Activated CD8-positive, alpha-beta memory T cell treated with anti-CD3 and anti-CD28 coated beads, Interleukin-2, amount 10 ng/mL, durations not matched to agents 7 days and 5 days (primary cell): ENCODE measurements at regions of chr17 and their contacts with region 1.

Region 1: GRCh38 chr17:45385331-45385997 is 47.2 kb downstream of the ARHGAP27 start:
- DNase-seq: peak; percentile 92
- ATAC-seq: peak; percentile 97
- H3K4me3 Mint-ChIP-seq: no peak overlapping the region
- H3K27ac Mint-ChIP-seq: no peak overlapping the region
- H3K4me1 Mint-ChIP-seq: peaks cover 25% of the 10 kb centered on the region
- H3K27me3 Mint-ChIP-seq: peaks cover 7% of the 10 kb centered on the region

Region 2: GRCh38 chr17:45087504-45087975 is 297.9 kb before region 1 on chr17:
- CTCF ChIA-PET with region 1: no interaction called
- DNase-seq: no peak
- ATAC-seq: no peak
- H3K4me3 Mint-ChIP-seq: no peak overlapping the region
- H3K27ac Mint-ChIP-seq: no peak overlapping the region
- H3K4me1 Mint-ChIP-seq: peaks cover 12% of the 10 kb centered on the region
- H3K27me3 Mint-ChIP-seq: no peaks in the 10 kb centered on the region

Region 3: DNA sequence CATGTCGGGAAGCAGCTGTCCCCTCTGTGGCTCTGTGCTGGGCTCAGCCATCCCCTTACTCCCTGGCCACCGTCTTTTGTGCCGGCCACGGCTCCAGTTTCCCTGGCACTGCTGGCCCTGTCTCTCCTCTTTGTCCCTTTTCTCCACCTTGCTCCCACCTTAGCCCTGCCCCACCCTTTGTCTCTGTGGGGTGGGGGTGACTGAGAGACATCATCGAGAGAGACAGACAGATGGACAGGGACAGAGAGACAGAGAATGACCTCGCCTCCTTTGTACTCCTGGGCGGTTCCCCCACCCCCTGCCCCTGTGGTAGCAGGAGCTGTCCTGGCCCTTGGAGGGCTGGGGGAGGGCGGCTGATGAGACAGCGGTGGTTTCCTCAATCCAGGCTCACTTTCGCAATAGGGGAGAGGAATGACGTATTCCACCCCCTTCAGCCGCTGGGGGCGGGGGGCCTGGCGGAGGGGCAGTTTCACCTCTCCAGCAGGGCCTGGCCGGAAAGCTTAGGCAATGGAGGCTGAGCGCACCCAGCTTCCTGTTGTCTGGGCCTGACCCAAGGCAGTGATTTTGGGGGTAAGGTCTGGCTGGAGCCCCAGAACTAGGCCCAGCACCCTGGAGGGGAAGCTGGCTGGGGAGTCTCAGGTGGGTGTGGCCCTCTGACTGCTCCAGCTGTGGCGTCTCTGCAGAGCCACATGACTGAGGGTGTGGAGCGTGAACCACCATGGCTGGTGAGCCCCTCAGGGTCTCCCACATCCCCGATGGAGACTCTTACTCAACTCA is 156.5 kb before region 1 on chr17:
- CTCF ChIA-PET with region 1: interaction called, 23 read pairs
- DNase-seq: peak; percentile 93
- ATAC-seq: peak; percentile 47
- H3K4me3 Mint-ChIP-seq: peak overlapping the region; percentile 93
- H3K27ac Mint-ChIP-seq: peak overlapping the region; percentile 100
- H3K4me1 Mint-ChIP-seq: peaks cover 74% of the 10 kb centered on the region
- H3K27me3 Mint-ChIP-seq: no peaks in the 10 kb centered on the region

Region 4: GRCh38 chr17:45261577-45262515 is 123.6 kb before region 1 on chr17 and contains the start of gene SPATA32:
- CTCF ChIA-PET with region 1: interaction called, 15 read pairs
- DNase-seq: peak; percentile 88
- ATAC-seq: peak; percentile 91
- H3K4me3 Mint-ChIP-seq: peak within 1 kb of the TSS; percentile 74
- H3K27ac Mint-ChIP-seq: peak within 1 kb of the TSS; percentile 83
- H3K4me1 Mint-ChIP-seq: peaks cover 26% of the 10 kb centered on the region
- H3K27me3 Mint-ChIP-seq: no peaks in the 10 kb centered on the region
- total RNA-seq, gene SPATA32: 0.23 to 0.49 TPM

Region 5: DNA sequence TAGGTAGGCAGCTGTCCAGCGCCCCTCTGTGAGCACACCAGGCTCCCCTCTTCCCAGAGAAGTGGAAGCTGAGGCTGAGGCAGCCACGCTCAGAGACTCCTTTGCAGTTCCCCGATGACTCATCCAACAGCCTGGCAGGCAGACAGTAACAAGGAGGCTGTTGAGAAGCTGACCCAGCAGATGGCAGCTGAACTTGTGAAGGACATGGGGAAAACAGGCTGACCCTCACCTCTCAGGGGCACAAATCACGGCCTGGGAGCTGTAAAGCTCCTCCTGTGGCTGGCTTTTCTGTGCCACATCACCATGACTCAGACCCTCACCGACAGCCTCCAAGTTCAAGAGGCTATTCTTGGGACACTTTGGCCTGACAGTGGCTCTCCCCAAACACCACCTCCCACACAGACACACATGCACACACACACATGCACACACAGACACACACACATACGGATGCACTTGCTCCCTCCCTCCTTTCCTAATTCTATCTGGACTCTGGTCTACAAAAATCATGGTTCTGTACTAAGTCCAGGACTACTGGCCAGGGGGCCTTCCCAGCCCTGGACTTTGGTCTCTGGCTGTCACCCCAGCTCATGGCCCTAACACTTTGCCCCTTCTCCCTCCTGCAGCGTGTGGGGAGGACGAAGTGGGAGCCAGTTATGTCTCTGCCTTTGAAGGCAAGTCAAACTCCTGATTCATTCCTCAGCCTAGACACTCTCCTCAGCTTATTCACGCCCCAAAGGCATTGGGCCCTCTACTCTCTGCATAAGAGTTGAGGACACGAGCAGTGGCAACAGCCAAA is 91.9 kb before region 1 on chr17:
- CTCF ChIA-PET with region 1: interaction called, 10 read pairs
- DNase-seq: no peak
- ATAC-seq: peak; percentile 55
- H3K4me3 Mint-ChIP-seq: no peak overlapping the region
- H3K27ac Mint-ChIP-seq: peak overlapping the region; percentile 61
- H3K4me1 Mint-ChIP-seq: peaks cover 82% of the 10 kb centered on the region
- H3K27me3 Mint-ChIP-seq: no peaks in the 10 kb centered on the region

Region 6: DNA sequence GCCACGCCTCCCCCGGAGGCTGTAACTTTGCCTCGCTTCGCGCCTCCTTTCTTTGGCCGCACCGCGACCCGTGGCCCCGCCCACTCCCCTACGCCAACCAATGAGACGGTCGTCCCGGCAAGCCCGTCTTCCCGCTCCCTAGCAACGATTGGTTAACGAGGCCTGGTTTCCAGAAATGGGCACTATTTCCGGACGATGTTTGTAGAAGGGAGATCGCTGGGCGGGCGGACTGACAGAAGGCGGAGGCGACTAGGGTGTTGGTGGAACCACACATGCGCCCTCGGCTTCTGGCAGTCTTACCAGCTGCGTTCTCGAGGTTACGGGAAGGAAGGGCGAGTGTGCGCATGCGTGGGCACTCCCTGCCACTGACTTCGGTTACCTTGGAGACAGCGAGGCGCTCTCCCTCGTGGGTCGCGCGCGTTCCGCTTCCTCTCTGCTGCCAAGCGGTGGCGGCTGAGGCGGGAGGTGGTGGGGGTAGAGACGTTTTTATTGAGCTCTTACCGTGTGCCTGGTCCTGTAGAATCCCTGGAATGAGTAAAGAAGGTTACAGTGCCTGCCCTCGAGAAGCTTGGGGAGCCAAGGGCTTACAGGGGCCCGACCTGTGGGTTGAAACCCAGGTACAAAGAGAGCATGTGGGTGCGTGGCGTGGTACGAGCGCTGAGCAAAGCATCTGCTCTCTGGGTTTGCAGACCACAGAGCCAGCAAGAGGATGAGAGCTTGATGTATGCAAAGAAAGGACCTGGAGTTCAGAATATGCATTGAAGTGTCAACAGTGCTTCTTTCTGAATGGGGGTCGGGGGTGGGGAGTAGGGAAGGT is 68.1 kb before region 1 on chr17:
- CTCF ChIA-PET with region 1: interaction called, 28 read pairs
- DNase-seq: peak; percentile 100
- ATAC-seq: peak; percentile 84
- H3K4me3 Mint-ChIP-seq: peak overlapping the region; percentile 81
- H3K27ac Mint-ChIP-seq: peak overlapping the region; percentile 85
- H3K4me1 Mint-ChIP-seq: peaks cover 66% of the 10 kb centered on the region
- H3K27me3 Mint-ChIP-seq: no peaks in the 10 kb centered on the region